ENCODE measurements at regions of chr18 and their contacts with region 1.

Region 1: DNA sequence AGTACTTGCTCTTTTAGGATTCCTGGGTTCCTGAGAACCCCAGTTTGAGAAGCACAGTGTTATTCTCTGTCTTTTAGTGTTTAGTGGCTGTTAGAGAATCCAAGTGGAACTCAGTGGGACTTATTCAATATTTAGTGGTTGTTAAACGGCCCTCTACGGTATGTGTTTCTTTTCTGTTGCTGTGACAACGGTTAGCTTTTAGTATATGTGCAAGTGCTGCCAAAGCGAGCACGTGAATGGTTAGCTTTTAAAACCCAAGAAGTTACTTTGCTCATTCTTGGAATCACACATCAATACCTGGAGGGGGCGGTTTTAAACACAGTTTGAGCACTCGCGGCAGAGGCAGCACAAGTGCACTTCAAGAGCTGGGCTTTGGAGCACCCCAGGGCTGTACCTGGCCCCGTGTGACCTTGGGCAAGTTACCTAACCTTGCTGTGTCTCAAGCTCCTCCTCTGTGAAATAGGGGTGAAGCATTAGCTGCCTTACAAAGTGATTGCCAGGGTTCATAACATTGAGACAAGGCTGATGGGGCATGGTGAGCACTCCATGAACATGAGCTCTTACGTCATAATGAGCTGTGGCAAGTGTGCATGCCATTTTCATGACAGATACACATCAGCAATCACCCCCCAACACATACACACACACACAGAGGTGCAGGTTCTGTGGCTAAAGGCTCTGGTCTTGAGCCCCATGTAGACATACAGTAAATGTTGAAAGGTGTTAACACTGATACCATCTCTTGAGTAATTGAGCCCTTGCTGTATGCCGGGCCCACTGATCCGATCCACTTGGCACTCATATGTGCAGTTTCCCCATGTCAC is 234.1 kb downstream of the ALPK2 start:
- DNase-seq: no peak
- H3K4me3 ChIP-seq: no peak overlapping the region
- H3K27ac ChIP-seq: no peak overlapping the region
- H3K4me1 ChIP-seq: peaks cover 0 to 34% (median 30%) of the 10 kb centered on the region in 4 donors
- H3K27me3 ChIP-seq: no peaks in the 10 kb centered on the region
- CTCF ChIP-seq: no peak
- EP300 ChIP-seq: no peak
- POLR2A ChIP-seq: no peak

Region 2: DNA sequence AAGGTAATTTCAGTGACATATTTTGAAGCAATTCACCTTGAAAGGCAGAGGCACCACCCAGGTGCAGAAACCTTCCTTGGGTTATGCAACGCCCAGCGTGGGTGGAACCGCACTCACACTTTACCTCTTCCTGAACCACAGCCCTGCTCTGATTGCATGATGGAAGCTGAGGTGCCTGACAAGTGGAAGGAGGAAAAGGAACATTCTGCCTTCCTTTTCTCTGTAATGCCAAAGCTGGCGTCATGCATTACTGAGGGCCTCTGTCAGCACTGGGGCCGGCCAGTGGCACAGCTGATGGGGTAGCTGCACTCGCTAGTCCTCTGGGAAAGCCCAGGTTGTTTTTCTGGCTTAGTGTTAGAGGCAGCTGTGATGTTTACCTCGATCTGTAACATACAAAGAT is 84.3 kb before region 1 on chr18:
- intact Hi-C with region 1: no loop called
- DNase-seq: no peak
- H3K4me3 ChIP-seq: no peak overlapping the region
- H3K27ac ChIP-seq: peak overlapping the region; percentile 44 to 70 (median 61)
- H3K4me1 ChIP-seq: peaks cover 28 to 57% (median 45%) of the 10 kb centered on the region in 4 donors
- H3K27me3 ChIP-seq: no peaks in the 10 kb centered on the region
- CTCF ChIP-seq: no peak
- EP300 ChIP-seq: peak; percentile 78
- POLR2A ChIP-seq: no peak

Region 3: GRCh38 chr18:58344861-58345463 is 49.9 kb before region 1 on chr18:
- intact Hi-C with region 1: no loop called
- DNase-seq: peak; percentile 39
- H3K4me3 ChIP-seq: no peak overlapping the region
- H3K27ac ChIP-seq: no peak overlapping the region
- H3K4me1 ChIP-seq: no peaks in the 10 kb centered on the region
- H3K27me3 ChIP-seq: no peaks in the 10 kb centered on the region
- CTCF ChIP-seq: no peak
- EP300 ChIP-seq: no peak
- POLR2A ChIP-seq: no peak

Region 4: GRCh38 chr18:58493516-58494253 is 98.9 kb after region 1 on chr18:
- intact Hi-C with region 1: loop called (anchors 5 kb)
- DNase-seq: peak; percentile 94
- H3K4me3 ChIP-seq: peak overlapping the region; percentile 23 to 38 (median 31)
- H3K27ac ChIP-seq: peak overlapping the region; percentile 34 to 71 (median 66)
- H3K4me1 ChIP-seq: peaks cover 29 to 75% (median 67%) of the 10 kb centered on the region in 4 donors
- H3K27me3 ChIP-seq: no peaks in the 10 kb centered on the region
- CTCF ChIP-seq: peak; percentile 80 to 90 (median 88)
- EP300 ChIP-seq: no peak
- POLR2A ChIP-seq: no peak

Measured in esophagus muscularis mucosa (tissue), 4 donors.